ENCODE measurements at regions of chr10 and their contacts with region 1.

Region 1: DNA sequence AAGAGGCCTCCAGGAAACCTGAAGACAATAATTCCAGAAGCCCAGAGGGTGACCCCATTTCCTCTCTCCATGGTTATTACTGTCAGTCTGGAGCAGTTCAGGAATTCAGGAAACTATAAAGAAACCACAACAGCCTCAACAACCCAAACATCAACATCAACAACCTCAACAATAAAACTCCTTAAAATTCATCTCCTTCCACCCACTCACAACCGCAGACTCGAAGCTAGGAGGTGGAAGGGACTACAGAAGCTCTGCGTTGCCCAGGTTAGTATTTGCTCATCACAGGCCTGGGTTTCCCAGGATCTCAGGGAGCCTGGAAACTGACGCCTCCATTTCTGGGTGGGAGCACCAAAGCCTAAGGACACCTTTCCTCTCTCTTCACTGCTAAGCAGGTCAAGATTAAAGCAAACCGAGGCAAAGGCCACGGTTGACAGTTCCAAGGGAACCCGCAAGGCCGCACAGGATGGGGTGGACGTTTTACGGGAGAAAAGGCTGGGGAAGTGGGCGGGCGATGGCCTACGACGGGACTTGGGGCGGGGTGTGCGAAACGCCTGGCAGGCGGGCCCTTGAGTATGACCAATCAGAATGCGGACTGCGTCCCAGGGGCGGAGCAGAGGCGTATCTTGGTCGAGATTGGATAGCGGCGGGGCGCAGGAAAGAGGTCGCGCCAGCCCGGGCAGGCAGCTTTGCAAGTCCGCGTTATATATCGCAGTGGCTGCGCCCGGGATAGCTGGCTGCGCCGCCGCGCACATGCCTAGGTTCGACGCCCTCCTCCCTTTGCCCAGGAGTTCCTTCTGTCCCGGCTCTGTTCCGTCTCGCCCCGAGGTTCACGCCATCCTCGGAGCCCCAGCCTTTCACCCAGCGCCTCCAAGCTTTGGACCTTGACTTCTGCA is at the start of gene ELOVL3:
- DNase-seq: peak; percentile 83

Region 2: DNA sequence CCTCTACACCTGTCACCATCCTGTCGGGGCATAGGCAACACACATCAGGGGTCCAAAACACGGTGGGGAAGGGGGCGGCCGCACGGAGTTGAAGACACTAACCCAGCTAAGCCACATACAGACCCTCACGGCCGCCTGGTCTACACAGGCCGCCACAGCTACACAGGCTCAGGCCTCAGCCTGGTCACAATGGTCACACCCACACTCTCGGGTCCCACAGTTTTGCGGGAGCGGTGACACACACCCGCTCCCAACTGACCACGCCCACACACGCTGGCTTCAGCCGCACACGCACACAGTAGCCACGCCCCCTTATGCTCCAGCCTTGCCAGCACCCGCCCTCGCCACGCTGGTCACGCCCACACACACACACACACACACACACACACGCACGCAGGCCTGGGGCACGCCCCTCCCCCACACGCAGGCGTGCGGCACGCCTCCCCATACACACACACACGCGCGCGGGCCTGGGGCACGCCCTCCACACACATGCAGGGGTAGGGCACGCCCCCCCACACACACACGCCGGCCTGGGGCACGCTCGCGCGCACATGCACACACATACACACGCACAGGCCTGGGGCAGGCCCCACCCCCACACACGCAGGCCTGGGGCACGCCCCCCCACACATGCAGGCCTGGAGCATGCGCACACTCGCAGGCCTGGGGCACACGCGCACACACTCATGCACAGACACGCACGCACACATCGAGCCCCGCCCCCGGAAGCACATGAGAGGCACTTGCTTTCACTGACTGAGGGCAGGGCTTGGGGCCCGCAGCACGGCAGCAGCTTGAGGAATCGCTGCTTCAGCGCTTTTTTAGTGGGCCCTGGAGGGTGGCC is 395.3 kb before region 1 on chr10:
- in situ Hi-C with region 1: no loop called
- DNase-seq: peak; percentile 86

Region 3: DNA sequence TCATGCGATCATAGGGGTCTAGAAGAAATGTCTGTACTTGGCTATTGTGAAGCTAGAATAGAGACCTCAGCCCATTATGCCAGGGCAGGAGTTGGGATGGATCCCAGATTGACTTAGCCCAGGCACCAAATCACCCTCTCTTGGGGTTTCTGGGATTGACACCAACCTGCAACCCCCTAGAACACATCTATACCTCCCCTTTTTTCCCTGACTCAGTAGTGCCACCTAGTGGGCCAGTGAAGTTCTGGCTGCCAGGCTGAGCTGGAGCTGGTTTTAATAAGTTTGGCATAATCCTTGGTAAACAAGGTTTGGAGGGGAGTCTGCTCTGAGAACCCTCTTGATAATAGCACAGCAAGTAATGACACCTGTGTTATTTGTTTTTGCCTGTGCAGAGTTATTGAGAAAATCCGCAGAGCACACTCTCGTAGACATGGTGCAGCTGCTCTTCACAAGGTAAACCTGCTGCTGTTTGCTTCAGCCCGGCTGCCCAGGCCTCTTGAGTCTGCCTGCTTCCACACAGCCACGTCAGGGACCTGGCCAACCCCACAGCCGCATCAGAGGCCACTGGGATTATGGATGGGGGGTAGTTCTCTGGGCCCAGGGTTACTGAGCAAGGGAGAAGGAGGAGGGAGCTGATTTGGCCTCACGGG is 126.3 kb after region 1 on chr10:
- in situ Hi-C with region 1: loop called (anchors 10 kb)
- DNase-seq: peak; percentile 74